Right ventricle myocardium superior (tissue), 1 donor: ENCODE measurements at regions of chr15 and their contacts with region 1.

Region 1: GRCh38 chr15:99059010-99059981 is 45.6 kb upstream of the SYNM start:
- DNase-seq: peak; percentile 84
- ATAC-seq: peak; percentile 90

Region 2: DNA sequence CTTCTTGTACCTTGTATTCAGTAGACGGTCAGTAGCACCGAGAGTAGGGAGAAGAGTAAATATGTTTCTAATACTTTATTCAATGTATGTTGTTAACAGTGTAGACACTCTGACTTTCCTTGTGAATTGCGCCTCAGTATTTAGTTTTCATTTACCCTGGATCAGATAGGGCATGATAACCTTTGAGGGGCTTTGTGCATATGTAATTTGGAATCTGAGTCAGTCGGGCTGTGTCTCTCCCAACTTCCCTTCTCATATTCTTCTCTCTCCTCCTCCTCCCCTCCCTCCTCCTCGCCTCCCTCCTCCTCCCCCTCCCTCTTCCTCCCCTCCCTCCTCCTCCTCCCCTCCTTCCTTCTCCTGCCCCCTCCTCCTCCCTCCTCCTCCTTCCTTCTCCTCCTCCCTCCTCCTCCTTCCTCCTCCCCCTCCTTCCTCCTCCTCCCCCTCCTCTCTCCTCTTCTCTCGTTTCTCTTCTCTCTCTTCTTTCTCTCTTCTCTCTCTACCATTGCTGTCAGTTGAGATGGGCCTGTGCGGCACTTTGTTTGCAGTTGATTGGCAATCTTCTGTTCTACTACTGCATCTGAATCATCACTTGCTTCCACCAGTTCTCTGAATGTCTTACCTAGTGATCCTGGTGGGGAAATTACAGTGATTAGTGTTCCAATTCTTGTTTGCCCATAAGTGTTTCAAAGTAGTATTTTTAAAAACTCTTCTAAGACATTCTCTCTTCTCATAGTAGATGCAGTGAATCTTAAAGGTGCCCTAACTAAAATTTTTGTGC is 214.0 kb before region 1 on chr15:
- intact Hi-C with region 1: no loop called
- DNase-seq: no peak
- ATAC-seq: no peak

Region 3: DNA sequence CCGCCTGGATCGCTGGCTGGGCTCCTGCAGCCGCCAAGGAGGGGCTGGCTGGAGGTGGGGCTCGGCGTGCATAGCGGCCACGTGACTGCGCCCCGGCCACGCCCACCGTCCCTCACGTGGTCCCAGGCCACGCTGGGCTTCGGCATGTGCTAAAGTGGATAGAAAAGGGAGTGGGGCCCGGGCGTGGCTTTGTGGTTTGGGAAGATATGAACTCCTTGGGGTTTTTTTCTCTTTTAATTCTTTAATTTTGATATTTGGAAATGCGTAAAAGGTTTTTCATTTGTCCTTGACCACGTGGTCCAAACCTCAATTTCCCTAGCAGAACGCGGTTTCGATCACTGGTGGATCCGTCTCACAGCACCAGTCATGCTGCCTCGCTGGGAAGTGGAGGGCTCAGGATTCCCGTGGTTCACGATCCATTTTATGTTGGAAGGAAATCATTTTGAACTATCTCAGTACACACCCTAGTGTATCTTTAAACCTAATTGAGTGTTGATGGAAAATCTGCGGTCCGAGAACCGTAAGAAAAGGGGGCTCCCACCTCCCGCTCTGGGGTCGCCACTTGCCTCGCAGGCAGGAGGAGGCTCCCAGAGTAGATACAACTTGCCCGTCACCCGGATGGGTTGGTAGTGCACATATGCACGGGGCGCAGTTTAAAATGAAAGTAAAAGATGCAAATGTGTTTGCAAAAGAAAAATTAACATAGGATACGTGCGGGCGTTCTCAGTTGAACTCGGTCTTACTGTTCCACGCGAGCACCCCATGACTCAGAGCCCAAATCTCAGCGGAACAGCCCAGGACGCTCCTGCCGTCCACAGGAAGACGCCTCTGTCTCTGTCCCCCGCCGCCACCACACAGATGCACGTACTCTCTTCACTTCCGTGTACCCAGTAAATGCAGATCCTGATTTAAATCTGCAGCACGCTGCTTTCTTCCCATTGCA is 193.6 kb before region 1 on chr15:
- intact Hi-C with region 1: loop called (anchors 10 kb)
- DNase-seq: peak; percentile 87
- ATAC-seq: peak; percentile 88

Region 4: DNA sequence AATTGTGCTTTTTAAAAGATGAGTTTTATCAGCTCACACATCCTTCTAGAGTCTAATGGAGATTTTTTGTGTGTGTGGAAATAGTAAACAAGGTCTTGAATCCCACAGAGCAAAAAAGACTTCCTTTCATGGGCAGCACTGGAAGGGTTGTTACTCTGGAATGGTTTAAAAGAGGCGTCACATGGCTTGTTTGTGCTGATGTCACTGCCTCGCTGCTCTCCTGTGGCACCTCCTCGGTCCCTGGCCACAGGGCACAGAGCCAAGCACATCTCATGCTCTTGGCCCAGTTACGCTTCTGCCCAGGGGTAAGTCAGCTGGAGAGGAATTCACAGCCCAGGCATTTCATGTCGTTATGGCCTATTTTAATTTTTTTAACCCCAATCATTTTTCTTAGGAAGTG is 104.9 kb before region 1 on chr15:
- intact Hi-C with region 1: loop called (anchors 5 kb)
- DNase-seq: peak; percentile 87
- ATAC-seq: peak; percentile 85